ENCODE measurements at regions of chr1 and their contacts with region 1.

Region 1: DNA sequence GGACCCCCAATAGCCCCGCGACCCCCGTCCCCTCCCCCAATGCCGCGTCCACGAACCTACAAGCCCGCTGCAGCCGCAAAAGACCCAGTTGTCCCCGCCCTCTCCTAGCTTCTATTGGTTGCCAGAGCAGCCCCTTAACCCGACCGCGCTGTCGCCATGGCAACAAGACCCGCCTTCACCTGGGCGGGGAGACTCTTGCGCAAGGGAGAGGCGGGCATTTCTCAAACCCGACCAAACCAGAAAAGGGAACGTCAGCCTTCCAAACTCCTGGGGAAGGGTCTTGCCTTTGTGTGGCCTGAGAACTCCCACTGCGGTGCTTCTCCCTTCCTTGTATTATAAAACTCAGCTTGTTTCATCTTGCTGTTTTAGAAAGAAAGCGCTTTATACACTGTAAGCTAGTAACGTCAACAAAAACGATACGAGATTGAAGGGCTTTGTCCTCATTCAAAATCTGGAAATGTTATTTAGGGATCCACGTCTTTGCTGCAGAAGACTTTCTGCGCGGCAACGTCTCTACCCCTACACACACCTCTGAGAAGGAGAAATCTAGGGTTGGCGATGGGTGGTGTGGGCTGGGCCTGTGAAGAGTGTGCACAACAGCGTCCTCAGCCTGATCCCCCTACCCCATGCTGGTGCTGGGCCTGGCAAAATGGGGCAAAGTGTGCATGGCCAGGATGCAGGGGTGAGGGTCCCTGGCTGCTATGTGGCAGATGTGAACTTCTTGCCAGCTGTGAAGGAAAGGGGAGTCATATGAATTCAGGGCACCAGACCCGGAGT is at the start of gene TMEM9:
- DNase-seq: peak; percentile 89 to 92 (median 91)
- H3K4me3 ChIP-seq: peak within 1 kb of the TSS; percentile 54 to 86 (median 71)
- H3K4me3 Mint-ChIP-seq: peak within 1 kb of the TSS; percentile 88 to 89
- H3K27ac ChIP-seq: peak within 1 kb of the TSS; percentile 31 to 66
- H3K27ac Mint-ChIP-seq: peak within 1 kb of the TSS; percentile 46 to 93 (median 82)
- H3K4me1 ChIP-seq: peaks cover 14 to 17% of the 10 kb centered on the region in 2 donors
- H3K4me1 Mint-ChIP-seq: peaks cover 16% of the 10 kb centered on the region
- H3K27me3 ChIP-seq: no peaks in the 10 kb centered on the region
- H3K27me3 Mint-ChIP-seq: peaks cover 0 to 7% (median 0%) of the 10 kb centered on the region in 3 donors
- CTCF ChIP-seq: no peak
- polyA plus RNA-seq, gene TMEM9: 13.6 to 43.6 (median 22.4) TPM

Region 2: DNA sequence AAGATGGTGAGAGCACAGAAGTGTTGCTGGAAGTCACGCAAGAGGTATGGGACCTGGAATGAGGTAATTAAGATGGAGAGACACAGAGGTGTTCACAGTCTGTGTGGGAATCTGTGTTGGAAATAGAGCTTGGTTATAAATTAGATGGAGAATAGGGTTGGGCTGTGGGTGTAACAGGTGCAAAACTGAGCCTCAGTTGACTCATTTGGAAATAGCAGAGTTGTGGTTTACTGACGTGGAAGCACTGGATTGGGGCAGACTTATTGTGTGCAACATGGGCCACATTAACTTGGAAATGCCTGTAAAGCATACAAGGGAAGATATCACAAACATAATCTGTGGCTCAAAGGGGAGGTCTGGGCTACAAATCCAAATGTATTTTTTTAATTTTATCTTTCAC is 402.9 kb before region 1 on chr1:
- intact Hi-C with region 1: no loop called
- DNase-seq: no peak
- H3K4me3 ChIP-seq: no peak overlapping the region
- H3K4me3 Mint-ChIP-seq: no peak overlapping the region
- H3K27ac ChIP-seq: no peak overlapping the region
- H3K27ac Mint-ChIP-seq: no peak overlapping the region
- H3K4me1 ChIP-seq: no peaks in the 10 kb centered on the region
- H3K4me1 Mint-ChIP-seq: no peaks in the 10 kb centered on the region
- H3K27me3 ChIP-seq: no peaks in the 10 kb centered on the region
- H3K27me3 Mint-ChIP-seq: peaks cover 2 to 8% (median 3%) of the 10 kb centered on the region in 3 donors
- CTCF ChIP-seq: no peak

Region 3: GRCh38 chr1:201216395-201217085 is 62.0 kb after region 1 on chr1:
- intact Hi-C with region 1: loop called in 1 of 2 experiments (anchors 5 kb)
- DNase-seq: no peak
- H3K4me3 ChIP-seq: no peak overlapping the region
- H3K4me3 Mint-ChIP-seq: no peak overlapping the region
- H3K27ac ChIP-seq: no peak overlapping the region
- H3K27ac Mint-ChIP-seq: no peak overlapping the region
- H3K4me1 ChIP-seq: no peaks in the 10 kb centered on the region
- H3K4me1 Mint-ChIP-seq: no peaks in the 10 kb centered on the region
- H3K27me3 ChIP-seq: no peaks in the 10 kb centered on the region
- H3K27me3 Mint-ChIP-seq: peaks cover 9 to 10% (median 9%) of the 10 kb centered on the region in 3 donors
- CTCF ChIP-seq: no peak

Measured in CD14-positive monocyte (primary cell).